WTC11 (cell line): ENCODE measurements at regions of chr19 and their contacts with region 1.

Region 1: DNA sequence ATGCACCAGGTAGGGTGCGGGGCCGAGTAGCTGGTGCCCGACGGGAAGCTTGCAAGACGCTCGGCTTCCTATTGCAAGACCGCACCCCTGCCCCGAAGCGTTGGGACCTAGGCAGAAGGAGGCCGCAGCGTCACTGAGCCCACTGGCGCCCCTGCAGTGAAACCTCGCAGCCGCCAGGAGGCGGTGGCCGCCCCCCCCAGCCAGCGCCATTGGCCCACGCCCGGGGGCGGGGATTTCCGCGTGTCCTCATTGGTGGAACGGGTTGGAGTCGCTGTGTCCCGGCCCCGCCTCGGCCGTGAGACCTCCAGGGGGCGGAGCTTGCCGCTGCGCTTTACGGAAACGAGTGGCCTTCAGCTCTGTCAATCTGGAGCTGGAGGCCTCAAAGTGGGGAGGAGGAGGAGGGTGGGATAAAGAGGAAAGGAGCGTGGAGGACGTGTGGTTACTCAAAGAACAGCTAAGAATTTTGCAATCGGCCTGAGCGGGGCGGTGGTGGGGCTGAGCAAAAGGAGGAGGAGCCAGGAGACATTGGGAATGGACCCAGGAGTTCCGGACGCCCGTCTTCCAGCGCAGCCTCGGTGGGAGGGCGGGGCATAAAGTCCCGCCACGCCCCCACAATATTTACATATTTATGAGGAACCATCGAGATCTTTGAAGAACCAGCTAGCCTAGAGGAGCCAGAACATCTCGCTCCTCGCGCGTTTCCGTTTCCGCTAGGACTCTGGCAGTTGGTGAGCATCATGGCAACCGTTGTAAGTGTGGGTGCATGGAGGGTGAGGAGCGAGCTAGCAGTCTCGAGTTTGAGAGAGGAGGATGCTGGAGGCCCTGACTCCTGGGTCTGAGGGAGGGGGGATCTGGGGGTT is at the starts of genes GYS1 and RUVBL2:
- DNase-seq: peak; percentile 100
- ATAC-seq: peak; percentile 93
- H3K4me3 Mint-ChIP-seq: peak within 1 kb of the TSS; percentile 99
- H3K27ac Mint-ChIP-seq: peak within 1 kb of the TSS; percentile 97
- H3K4me1 Mint-ChIP-seq: peaks cover 31% of the 10 kb centered on the region
- H3K27me3 Mint-ChIP-seq: no peaks in the 10 kb centered on the region
- CTCF ChIP-seq: peak; percentile 85
- total RNA-seq, gene GYS1: 45.9 to 52.0 TPM (median 46.1 TPM) in 3 replicates
- total RNA-seq, gene RUVBL2: 168 to 178 TPM (median 169 TPM) in 3 replicates

Region 2: DNA sequence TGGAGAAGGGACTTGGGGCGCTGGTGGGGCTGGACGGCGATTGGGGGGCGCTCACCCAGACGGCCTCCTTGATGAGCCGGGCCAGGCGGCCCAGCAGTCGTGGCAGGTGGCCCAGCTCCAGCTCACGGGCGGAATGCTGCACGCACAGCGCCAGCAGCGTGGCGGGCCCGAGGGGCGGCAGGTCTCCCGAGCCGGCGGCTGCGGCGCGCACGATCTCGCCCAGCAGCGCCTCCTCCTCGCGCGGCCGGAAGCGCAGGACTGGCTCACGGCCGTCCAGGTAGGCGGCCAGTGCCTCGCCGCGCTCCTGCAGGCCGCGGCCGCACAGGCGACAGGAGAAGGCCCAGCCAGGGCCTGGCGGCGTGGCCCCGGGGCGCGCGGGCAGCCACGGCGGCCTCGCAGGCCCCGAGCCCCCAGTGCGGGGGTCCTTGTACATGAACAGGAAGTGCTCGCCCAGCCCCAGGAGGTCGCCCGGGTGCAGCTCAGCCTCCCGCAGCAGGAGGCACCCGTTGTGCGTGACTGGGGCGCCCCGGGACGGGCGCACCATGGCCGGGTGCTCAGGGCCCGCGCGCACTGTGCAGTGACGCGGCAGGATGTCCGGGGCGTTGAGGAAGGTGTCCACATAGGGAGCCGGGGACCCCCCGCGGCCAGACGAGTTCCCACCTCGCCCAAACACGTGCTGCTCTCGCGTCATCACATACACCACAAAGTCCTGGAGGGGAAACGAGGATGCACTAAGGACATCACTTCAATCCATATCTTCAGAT is 264.3 kb before region 1 on chr19:
- CTCF ChIA-PET with region 1: no interaction called
- POLR2A ChIA-PET with region 1: no interaction called
- DNase-seq: peak; percentile 58
- ATAC-seq: peak; percentile 70
- H3K4me3 Mint-ChIP-seq: peak overlapping the region; percentile 52
- H3K27ac Mint-ChIP-seq: no peak overlapping the region
- H3K4me1 Mint-ChIP-seq: peaks cover 3% of the 10 kb centered on the region
- H3K27me3 Mint-ChIP-seq: peaks cover 46% of the 10 kb centered on the region
- CTCF ChIP-seq: no peak

Region 3: DNA sequence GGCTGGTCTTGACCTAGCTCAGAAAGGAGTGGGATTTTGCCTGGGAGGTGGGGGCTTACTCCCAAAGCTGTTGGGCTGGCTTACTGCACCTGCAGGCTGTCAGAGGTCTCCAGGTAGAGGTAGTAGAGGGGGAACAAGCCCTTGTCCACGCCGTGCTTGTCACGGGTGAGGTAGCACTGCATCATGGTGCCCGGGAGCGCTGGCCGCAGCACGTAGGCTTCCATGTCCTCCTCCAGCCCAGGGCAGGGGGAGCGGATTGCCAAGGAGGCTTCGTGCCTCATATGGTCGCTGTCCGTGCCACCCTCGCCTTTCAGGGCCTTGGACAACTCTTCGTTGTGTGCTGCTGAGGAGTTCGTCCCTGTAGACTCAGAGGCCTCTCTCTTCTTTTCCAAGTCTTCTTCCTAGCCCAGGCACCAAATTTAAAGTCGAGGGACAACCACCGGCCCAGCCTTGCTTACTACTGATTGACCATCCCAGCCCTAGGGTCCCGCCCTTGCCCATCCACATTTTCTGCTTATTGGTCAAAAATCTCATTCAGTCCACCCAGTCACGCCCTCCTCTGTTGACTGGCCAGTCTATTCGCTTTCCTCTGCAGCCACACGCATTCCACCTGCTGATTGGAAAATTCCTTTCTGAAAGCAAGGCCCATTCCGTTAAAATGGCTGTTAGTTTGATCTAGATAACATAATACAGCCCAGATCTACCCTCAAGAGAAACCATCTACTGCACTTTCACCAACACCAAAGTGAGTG is 105.4 kb before region 1 on chr19:
- CTCF ChIA-PET with region 1: no interaction called
- POLR2A ChIA-PET with region 1: no interaction called
- DNase-seq: peak; percentile 46
- ATAC-seq: peak; percentile 84
- H3K4me3 Mint-ChIP-seq: no peak overlapping the region
- H3K27ac Mint-ChIP-seq: no peak overlapping the region
- H3K4me1 Mint-ChIP-seq: peaks cover 12% of the 10 kb centered on the region
- H3K27me3 Mint-ChIP-seq: peaks cover 10% of the 10 kb centered on the region
- CTCF ChIP-seq: no peak

Region 4: GRCh38 chr19:48899781-48900476 is 93.5 kb before region 1 on chr19 and contains the start of gene NUCB1:
- CTCF ChIA-PET with region 1: interaction called, 23 read pairs
- POLR2A ChIA-PET with region 1: no interaction called
- DNase-seq: peak; percentile 100
- ATAC-seq: peak; percentile 87
- H3K4me3 Mint-ChIP-seq: peak within 1 kb of the TSS; percentile 97
- H3K27ac Mint-ChIP-seq: peak within 1 kb of the TSS; percentile 99
- H3K4me1 Mint-ChIP-seq: peaks cover 11% of the 10 kb centered on the region
- H3K27me3 Mint-ChIP-seq: peaks cover 9% of the 10 kb centered on the region
- CTCF ChIP-seq: no peak
- total RNA-seq, gene NUCB1: 145 to 153 TPM (median 149 TPM) in 3 replicates

Region 5: DNA sequence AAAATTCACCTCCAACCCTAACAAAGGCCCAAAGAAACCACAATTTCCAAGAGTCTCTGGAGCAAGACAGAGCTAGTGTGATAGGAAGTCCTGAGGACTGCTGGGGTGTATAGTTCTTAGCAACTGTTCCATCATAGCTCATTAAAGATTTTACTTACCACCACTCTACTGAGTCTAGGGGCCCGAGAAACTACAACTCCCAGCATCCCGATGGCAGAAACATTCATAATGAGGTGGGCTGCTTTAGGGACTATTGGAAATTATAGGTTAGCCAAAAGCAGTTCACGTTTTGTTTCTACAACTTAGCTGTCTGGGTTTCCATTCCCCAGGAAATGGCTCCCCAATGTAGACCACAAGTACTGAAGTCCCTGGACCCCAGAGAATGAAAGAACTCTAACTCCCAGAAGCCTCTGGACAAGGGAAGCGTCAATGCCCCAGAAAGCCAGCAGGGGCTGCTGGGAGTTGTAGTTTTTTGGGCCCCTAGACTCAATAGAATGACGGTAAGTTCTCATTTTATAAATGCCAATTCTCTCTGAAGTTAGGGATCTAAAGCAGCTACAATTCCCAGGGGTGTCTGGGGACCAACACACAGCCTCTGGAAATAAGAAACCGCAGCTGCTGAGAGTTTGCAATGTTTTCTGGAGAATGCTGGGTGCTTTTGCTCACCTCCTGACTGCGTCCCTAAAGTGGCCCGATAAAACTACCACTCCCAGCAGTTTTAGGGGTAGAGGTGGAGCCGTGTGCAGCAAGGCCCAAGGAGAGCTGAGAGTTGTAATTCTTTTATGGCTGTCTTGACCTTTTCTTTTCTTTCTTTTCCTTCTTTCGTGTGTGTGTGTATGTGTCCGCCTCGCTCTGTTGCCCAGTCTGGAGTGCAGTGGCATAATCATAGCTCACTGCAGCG is 17.2 kb before region 1 on chr19:
- CTCF ChIA-PET with region 1: interaction called, 60 read pairs
- POLR2A ChIA-PET with region 1: interaction called, 10 read pairs
- DNase-seq: peak; percentile 72
- ATAC-seq: peak; percentile 90
- H3K4me3 Mint-ChIP-seq: no peak overlapping the region
- H3K27ac Mint-ChIP-seq: peak overlapping the region; percentile 48; the same call in 1 of the 2 replicates
- H3K4me1 Mint-ChIP-seq: no peaks in the 10 kb centered on the region
- H3K27me3 Mint-ChIP-seq: no peaks in the 10 kb centered on the region
- CTCF ChIP-seq: no peak; the same call in 1 of the 2 replicates

Region 6: GRCh38 chr19:49056010-49056901 is 62.9 kb after region 1 on chr19:
- CTCF ChIA-PET with region 1: interaction called, 23 read pairs
- POLR2A ChIA-PET with region 1: no interaction called
- DNase-seq: peak; percentile 76
- ATAC-seq: peak; percentile 82
- H3K4me3 Mint-ChIP-seq: peak overlapping the region; percentile 71
- H3K27ac Mint-ChIP-seq: no peak overlapping the region
- H3K4me1 Mint-ChIP-seq: peaks cover 14% of the 10 kb centered on the region
- H3K27me3 Mint-ChIP-seq: peaks cover 75% of the 10 kb centered on the region
- CTCF ChIP-seq: peak; percentile 19; the same call in 1 of the 2 replicates

Region 7: DNA sequence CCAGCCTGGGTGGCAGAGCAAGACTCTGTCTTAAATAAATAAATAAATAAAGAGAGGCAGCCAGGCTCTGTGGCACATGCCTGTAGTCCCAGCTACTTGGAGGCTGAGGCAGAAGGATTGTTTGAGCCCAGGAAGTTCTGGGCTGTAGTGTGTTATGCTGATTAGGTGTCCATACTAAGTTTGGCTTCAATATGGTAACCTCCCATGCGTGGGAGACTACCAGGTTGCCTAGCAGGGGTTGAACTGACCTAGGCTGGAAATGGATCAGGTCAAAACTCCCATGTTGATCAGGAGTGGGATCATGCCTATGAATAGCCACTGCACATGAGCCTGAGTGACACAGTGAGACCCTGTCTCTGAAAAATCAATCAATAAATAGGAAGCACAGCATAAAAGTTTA is 87.9 kb after region 1 on chr19:
- CTCF ChIA-PET with region 1: no interaction called
- POLR2A ChIA-PET with region 1: no interaction called
- DNase-seq: no peak
- ATAC-seq: no peak
- H3K4me3 Mint-ChIP-seq: no peak overlapping the region
- H3K27ac Mint-ChIP-seq: no peak overlapping the region
- H3K4me1 Mint-ChIP-seq: peaks cover 9% of the 10 kb centered on the region
- H3K27me3 Mint-ChIP-seq: peaks cover 35% of the 10 kb centered on the region
- CTCF ChIP-seq: no peak

Region 8: GRCh38 chr19:49118565-49119410 is 125.4 kb after region 1 on chr19 and contains the start of gene C19orf73:
- CTCF ChIA-PET with region 1: interaction called, 14 read pairs
- POLR2A ChIA-PET with region 1: no interaction called
- DNase-seq: peak; percentile 94
- ATAC-seq: peak; percentile 81
- H3K4me3 Mint-ChIP-seq: peak within 1 kb of the TSS; percentile 75
- H3K27ac Mint-ChIP-seq: peak within 1 kb of the TSS; percentile 61
- H3K4me1 Mint-ChIP-seq: peaks cover 14% of the 10 kb centered on the region
- H3K27me3 Mint-ChIP-seq: peaks cover 64% of the 10 kb centered on the region
- CTCF ChIP-seq: no peak
- total RNA-seq, gene C19orf73: 3.1 to 3.4 TPM (median 3.2 TPM) in 3 replicates